Activated CD4-positive, alpha-beta T cell treated with anti-CD3 and anti-CD28 coated beads for 36 hours (primary cell): ENCODE measurements at regions of chr7 and their contacts with region 1.

Region 1: GRCh38 chr7:23181684-23182553 is at the start of gene NUP42:
- DNase-seq: peak; percentile 98
- ATAC-seq: peak; percentile 98
- H3K4me3 Mint-ChIP-seq: peak within 1 kb of the TSS; percentile 88
- H3K27ac Mint-ChIP-seq: peak within 1 kb of the TSS; percentile 97
- H3K4me1 Mint-ChIP-seq: peaks cover 30% of the 10 kb centered on the region
- H3K27me3 Mint-ChIP-seq: no peaks in the 10 kb centered on the region
- total RNA-seq, gene NUP42: 32.3 to 44.8 TPM

Region 2: DNA sequence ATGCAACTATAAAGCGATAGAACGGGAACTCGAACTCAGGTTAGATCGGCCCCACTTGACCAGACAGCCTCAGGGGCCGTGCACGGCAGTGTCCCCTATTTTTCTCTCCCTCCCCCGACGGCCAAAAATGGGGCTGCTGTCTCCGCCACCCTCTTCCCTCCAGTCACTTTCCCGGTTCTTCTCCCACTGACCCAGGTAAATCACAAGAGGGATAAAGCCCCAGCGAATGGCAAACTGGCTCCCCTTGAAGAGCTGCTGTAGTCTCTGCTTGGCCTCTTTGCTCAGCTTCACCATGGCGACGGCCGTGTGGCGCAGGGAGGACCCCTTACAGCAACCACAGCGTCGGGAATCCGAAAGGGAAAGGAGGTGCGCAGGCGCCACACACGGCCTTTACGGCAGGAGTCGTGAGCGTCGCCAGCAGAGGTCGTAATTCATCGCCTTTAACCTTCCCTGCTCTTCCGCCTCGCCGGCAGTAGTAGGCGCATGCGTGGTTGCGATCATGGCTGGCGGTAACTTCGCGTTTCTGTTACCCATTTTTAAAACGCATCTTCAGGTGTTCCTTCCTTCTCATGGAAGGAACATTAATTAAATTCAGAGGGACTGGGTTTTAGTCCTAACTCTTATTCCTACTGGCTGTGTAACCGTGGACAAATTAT is 359.3 kb before region 1 on chr7 and contains the start of gene TOMM7:
- CTCF ChIA-PET with region 1: no interaction called
- POLR2A ChIA-PET with region 1: no interaction called
- intact Hi-C with region 1: loop called (anchors 2 to 5 kb)
- DNase-seq: peak; percentile 92
- ATAC-seq: peak; percentile 81
- H3K4me3 Mint-ChIP-seq: peak within 1 kb of the TSS; percentile 98
- H3K27ac Mint-ChIP-seq: peak within 1 kb of the TSS; percentile 93
- H3K4me1 Mint-ChIP-seq: peaks cover 35% of the 10 kb centered on the region
- H3K27me3 Mint-ChIP-seq: peaks cover 6% of the 10 kb centered on the region
- total RNA-seq, gene TOMM7: 73.7 to 254 TPM

Region 3: GRCh38 chr7:23013715-23014649 is 167.9 kb before region 1 on chr7 and contains the start of gene HYCC1:
- CTCF ChIA-PET with region 1: no interaction called
- POLR2A ChIA-PET with region 1: no interaction called
- intact Hi-C with region 1: loop called (anchors 1 to 5 kb)
- DNase-seq: peak; percentile 99
- ATAC-seq: peak; percentile 99
- H3K4me3 Mint-ChIP-seq: peak within 1 kb of the TSS; percentile 92
- H3K27ac Mint-ChIP-seq: peak within 1 kb of the TSS; percentile 83
- H3K4me1 Mint-ChIP-seq: peaks cover 24% of the 10 kb centered on the region
- H3K27me3 Mint-ChIP-seq: peaks cover 3% of the 10 kb centered on the region
- total RNA-seq, gene HYCC1: 19.2 to 23.9 TPM

Region 4: DNA sequence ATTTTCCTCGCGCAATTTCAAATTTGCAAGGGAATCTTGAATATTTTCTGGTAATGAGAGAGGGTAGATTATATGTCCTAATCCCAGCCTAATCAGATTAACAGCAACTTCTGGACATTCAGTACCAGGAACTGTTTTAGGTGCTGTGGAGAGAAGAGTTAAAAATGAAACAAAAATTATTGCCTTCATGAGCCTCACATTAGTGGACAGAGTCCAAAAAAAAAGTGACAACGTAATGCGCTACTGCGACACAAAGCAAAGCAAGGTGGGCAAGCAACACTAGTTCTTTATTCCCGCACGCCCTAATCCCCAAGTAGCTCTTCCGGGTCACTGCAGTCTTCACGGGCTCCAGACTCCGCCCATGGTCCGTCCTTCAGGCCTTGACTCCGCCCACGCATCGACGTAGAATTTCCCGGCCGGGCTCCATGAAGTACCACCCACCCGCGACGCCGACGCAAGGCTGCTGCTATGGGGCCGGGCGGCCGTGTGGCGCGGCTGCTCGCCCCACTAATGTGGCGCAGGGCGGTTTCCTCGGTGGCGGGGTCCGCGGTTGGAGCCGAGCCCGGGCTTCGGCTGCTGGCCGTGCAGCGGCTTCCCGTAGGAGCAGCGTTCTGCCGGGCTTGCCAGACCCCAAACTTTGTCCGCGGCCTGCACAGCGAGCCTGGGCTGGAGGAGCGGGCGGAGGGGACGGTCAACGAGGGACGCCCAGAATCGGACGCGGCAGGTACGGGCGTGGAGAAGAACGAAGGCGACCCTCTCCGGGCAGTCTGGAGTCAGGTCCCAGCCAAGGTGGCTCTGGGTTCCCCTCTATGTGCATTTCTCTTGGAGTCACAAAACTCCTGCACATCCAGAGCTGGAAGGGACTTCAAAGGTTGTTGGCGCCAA is 117.2 kb after region 1 on chr7 and contains the start of gene MALSU1:
- CTCF ChIA-PET with region 1: no interaction called
- POLR2A ChIA-PET with region 1: no interaction called
- intact Hi-C with region 1: loop called in 1 of 2 experiments (anchors 1 kb)
- DNase-seq: peak; percentile 99
- ATAC-seq: peak; percentile 97
- H3K4me3 Mint-ChIP-seq: peak within 1 kb of the TSS; percentile 98
- H3K27ac Mint-ChIP-seq: peak within 1 kb of the TSS; percentile 97
- H3K4me1 Mint-ChIP-seq: peaks cover 38% of the 10 kb centered on the region
- H3K27me3 Mint-ChIP-seq: no peaks in the 10 kb centered on the region
- total RNA-seq, gene MALSU1: 97.7 to 98.4 TPM

Region 5: GRCh38 chr7:25125137-25125946 is 1943.4 kb after region 1 on chr7 and contains the start of gene CYCS:
- CTCF ChIA-PET with region 1: no interaction called
- POLR2A ChIA-PET with region 1: no interaction called
- intact Hi-C with region 1: loop called in 1 of 2 experiments (anchors 2 kb)
- DNase-seq: peak; percentile 100
- ATAC-seq: peak; percentile 97
- H3K4me3 Mint-ChIP-seq: peak within 1 kb of the TSS; percentile 97
- H3K27ac Mint-ChIP-seq: peak within 1 kb of the TSS; percentile 98
- H3K4me1 Mint-ChIP-seq: peaks cover 27% of the 10 kb centered on the region
- H3K27me3 Mint-ChIP-seq: no peaks in the 10 kb centered on the region
- total RNA-seq, gene CYCS: 222 to 237 TPM